GM12878 (cell line): ENCODE measurements at regions of chr17 and their contacts with region 1.

Region 1: DNA sequence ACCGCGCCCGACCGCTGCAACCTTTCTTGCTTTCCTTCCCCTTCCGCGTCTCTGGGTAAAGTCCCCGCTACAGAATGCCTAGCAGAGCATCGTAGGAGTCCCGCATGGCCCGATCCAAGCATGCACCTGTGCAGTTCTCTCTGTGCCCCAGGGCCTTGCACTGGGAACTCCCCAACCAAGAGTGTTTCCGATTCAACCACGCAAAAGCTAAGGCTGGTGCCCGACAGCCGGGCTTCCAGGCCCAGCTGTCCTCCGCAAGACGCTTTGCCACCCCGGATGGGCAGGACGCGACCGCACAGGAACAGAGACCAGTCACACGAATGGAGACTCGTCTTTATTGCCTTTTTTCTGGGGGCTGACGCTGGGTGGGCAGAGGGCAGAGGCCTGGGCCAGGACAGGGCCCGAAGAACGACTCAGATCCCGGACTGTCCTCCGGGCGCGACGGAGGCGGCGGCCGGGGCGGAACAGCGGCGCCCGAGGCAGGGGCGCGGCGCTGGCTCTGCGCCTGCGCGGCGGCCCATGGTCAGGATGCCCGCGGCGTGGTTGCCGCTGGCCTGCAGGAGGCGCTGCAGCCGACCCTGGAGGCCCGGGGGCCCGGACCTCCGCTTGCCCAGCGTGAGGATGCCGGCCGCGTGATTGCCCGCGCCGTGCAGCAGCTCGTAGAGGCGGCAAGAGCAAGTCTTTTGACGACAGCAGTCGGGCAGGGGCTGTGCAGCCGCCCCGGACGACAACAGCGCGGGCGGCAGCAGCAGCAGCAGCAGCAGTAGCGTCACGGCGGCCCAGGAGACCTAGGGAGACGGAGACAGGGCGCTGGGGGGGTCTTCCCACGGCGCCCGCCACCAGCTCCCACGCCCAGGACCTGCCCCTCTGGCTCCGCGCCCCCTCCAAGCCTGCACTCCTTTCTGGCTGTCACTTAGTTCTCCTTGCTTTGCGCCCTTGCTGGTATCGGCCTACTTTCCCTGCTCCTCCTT is 1.2 kb downstream of the HCRT start:
- DNase-seq: peak; percentile 23
- ATAC-seq: peak; percentile 79
- H3K4me3 ChIP-seq: peak overlapping the region; percentile 76
- H3K27ac ChIP-seq: no peak overlapping the region; the same call in 1 of the 2 replicates
- H3K4me1 ChIP-seq: peaks cover 27% of the 10 kb centered on the region
- H3K27me3 ChIP-seq: no peaks in the 10 kb centered on the region
- CTCF ChIP-seq: peak; percentile 74 to 90 (median 89)
- EP300 ChIP-seq: no peak
- POLR2A ChIP-seq: peak; percentile 73
- RAD21 ChIP-seq: no peak

Region 2: DNA sequence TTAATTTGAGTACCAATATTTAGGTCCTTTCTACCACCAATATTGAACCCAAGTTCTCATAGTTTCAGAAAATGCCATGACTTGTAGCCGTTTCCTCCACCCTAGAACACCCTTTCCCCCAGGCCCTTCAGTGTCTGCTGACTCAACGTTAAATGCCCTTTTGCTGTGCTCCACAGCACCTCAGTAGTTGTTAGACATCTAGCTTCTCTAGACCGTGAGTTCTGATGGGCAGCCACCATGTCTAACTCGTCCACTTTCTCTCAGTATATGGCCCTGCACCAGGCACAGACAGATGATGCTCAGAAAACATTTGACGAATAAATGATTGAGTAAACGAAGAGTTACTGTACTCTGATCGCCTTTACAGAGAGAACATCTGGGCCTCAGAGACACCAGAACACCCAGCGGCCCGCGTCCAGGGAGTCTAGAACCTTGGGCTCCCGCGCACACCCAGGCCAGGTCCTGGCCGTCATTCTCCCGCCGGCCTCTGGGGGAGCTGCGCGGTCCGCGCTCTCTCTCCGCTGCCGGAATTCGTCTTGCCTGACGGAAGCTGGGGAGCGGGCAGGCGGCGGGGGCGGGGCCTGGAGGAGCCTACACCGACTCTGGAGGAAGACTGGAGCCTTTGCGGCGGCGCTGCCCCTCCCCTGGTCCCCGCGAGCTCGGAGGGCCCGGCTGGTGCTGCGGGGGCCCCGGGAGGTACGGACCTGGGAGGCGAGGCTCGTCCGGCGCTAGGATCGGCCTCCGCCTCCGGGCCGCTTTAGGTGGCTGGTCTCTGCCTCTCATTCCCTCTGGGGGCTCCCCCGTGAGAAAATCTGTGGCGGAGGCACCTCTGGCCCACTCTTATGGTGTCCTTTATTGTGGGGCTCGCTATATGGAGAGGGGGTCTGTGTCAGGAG is 164.3 kb before region 1 on chr17 and contains the start of gene NKIRAS2:
- CTCF ChIA-PET with region 1: interaction called, 22 read pairs
- POLR2A ChIA-PET with region 1: interaction called, 3 read pairs
- RAD21 ChIA-PET with region 1: interaction called, 7 read pairs
- SMC1A ChIA-PET with region 1: interaction called, 4 read pairs
- in situ Hi-C with region 1: no loop called
- intact Hi-C with region 1: no loop called
- DNase-seq: peak; percentile 50
- ATAC-seq: peak; percentile 84
- H3K4me3 ChIP-seq: peak within 1 kb of the TSS; percentile 88
- H3K27ac ChIP-seq: peak within 1 kb of the TSS; percentile 76
- H3K4me1 ChIP-seq: peaks cover 28% of the 10 kb centered on the region
- H3K27me3 ChIP-seq: no peaks in the 10 kb centered on the region
- CTCF ChIP-seq: peak; percentile 92 to 98 (median 98); a peak in 5 of 6 replicates
- EP300 ChIP-seq: no peak
- POLR2A ChIP-seq: peak; percentile 87
- RAD21 ChIP-seq: no peak
- polyA plus RNA-seq, gene NKIRAS2: 6.4 to 6.9 TPM

Region 3: GRCh38 chr17:42112552-42113176 is 71.4 kb before region 1 on chr17 and contains the start of gene DHX58:
- CTCF ChIA-PET with region 1: interaction called, 138 read pairs
- POLR2A ChIA-PET with region 1: interaction called, 15 read pairs
- RAD21 ChIA-PET with region 1: interaction called, 78 read pairs
- SMC1A ChIA-PET with region 1: interaction called, 53 read pairs
- in situ Hi-C with region 1: no loop called
- intact Hi-C with region 1: no loop called
- DNase-seq: peak; percentile 90
- ATAC-seq: peak; percentile 85
- H3K4me3 ChIP-seq: peak within 1 kb of the TSS; percentile 79
- H3K27ac ChIP-seq: peak within 1 kb of the TSS; percentile 98
- H3K4me1 ChIP-seq: peaks cover 37% of the 10 kb centered on the region
- H3K27me3 ChIP-seq: no peaks in the 10 kb centered on the region
- CTCF ChIP-seq: no peak
- EP300 ChIP-seq: no peak
- POLR2A ChIP-seq: peak; percentile 94
- RAD21 ChIP-seq: no peak
- polyA plus RNA-seq, gene DHX58: 3.5 to 3.7 TPM

Region 4: GRCh38 chr17:42132941-42133340 is 51.1 kb before region 1 on chr17:
- CTCF ChIA-PET with region 1: interaction called, 31 read pairs
- POLR2A ChIA-PET with region 1: interaction called, 5 read pairs
- RAD21 ChIA-PET with region 1: interaction called, 10 read pairs
- SMC1A ChIA-PET with region 1: interaction called, 4 read pairs
- in situ Hi-C with region 1: no loop called
- intact Hi-C with region 1: no loop called
- DNase-seq: no peak
- ATAC-seq: peak; percentile 57
- H3K4me3 ChIP-seq: no peak overlapping the region
- H3K27ac ChIP-seq: no peak overlapping the region
- H3K4me1 ChIP-seq: peaks cover 25% of the 10 kb centered on the region
- H3K27me3 ChIP-seq: no peaks in the 10 kb centered on the region
- CTCF ChIP-seq: no peak
- EP300 ChIP-seq: no peak
- POLR2A ChIP-seq: no peak
- RAD21 ChIP-seq: no peak

Region 5: GRCh38 chr17:42153919-42154742 is 29.9 kb before region 1 on chr17:
- CTCF ChIA-PET with region 1: interaction called, 12 read pairs
- POLR2A ChIA-PET with region 1: interaction called, 6 read pairs
- RAD21 ChIA-PET with region 1: interaction called, 4 read pairs
- SMC1A ChIA-PET with region 1: interaction called, 12 read pairs
- in situ Hi-C with region 1: no loop called
- intact Hi-C with region 1: no loop called
- DNase-seq: no peak
- ATAC-seq: peak; percentile 9
- H3K4me3 ChIP-seq: peak overlapping the region; percentile 91
- H3K27ac ChIP-seq: peak overlapping the region; percentile 84
- H3K4me1 ChIP-seq: peaks cover 5% of the 10 kb centered on the region
- H3K27me3 ChIP-seq: no peaks in the 10 kb centered on the region
- CTCF ChIP-seq: no peak
- EP300 ChIP-seq: no peak
- POLR2A ChIP-seq: 0 out of 2 replicates have a peak, but pooled peaks have one; percentile 13
- RAD21 ChIP-seq: no peak

Region 6: GRCh38 chr17:42193969-42194899 is 10.2 kb after region 1 on chr17 and contains the start of gene GHDC:
- CTCF ChIA-PET with region 1: interaction called, 23 read pairs
- POLR2A ChIA-PET with region 1: interaction called, 7 read pairs
- RAD21 ChIA-PET with region 1: interaction called, 16 read pairs
- SMC1A ChIA-PET with region 1: interaction called, 13 read pairs
- in situ Hi-C with region 1: no loop called
- intact Hi-C with region 1: no loop called
- DNase-seq: peak; percentile 53
- ATAC-seq: peak; percentile 99
- H3K4me3 ChIP-seq: peak within 1 kb of the TSS; percentile 92
- H3K27ac ChIP-seq: peak within 1 kb of the TSS; percentile 95
- H3K4me1 ChIP-seq: 0 out of 2 replicates have a peak, but pooled peaks cover 3% of the 10 kb centered on the region
- H3K27me3 ChIP-seq: no peaks in the 10 kb centered on the region
- CTCF ChIP-seq: 0 out of 6 replicates have a peak, but pooled peaks of 1 of the 3 experiments have one; percentile 6
- EP300 ChIP-seq: no peak
- POLR2A ChIP-seq: peak; percentile 74
- RAD21 ChIP-seq: no peak
- polyA plus RNA-seq, gene GHDC: 0.72 to 2.2 TPM

Region 7: GRCh38 chr17:42230225-42230624 is 46.2 kb after region 1 on chr17:
- CTCF ChIA-PET with region 1: no interaction called
- POLR2A ChIA-PET with region 1: no interaction called
- RAD21 ChIA-PET with region 1: no interaction called
- SMC1A ChIA-PET with region 1: no interaction called
- in situ Hi-C with region 1: no loop called
- intact Hi-C with region 1: no loop called
- DNase-seq: no peak
- ATAC-seq: peak; percentile 28; the same call in 1 of the 3 replicates
- H3K4me3 ChIP-seq: no peak overlapping the region
- H3K27ac ChIP-seq: no peak overlapping the region
- H3K4me1 ChIP-seq: no peaks in the 10 kb centered on the region
- H3K27me3 ChIP-seq: no peaks in the 10 kb centered on the region
- CTCF ChIP-seq: no peak
- EP300 ChIP-seq: no peak
- POLR2A ChIP-seq: no peak
- RAD21 ChIP-seq: no peak

Region 8: DNA sequence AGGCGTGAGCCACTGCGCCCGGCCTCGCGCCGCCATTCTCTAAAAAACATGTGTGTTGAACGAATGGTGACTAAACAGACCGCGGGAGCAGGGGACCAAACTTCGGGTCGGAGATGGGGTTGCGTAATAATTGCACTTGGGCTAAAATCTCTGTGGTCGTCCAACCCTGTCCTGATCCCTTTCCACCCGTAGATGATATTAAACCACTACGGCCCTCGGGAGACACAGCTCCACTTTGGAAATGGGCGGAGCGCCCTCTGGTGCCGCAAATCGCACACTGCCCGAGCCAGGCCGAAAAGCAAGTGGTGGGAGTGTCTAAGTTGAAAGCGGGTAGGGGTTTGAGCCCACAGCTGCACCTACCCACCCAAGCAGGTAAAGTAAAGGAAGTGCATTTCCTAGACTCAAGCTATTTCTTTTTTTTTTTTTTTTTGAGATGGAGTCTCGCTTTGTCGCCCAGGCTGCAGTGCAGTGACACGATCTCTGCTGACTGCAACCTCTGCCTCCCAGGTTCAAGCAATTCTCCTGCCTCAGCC is 222.0 kb after region 1 on chr17:
- CTCF ChIA-PET with region 1: interaction called, 11 read pairs
- POLR2A ChIA-PET with region 1: interaction called, 5 read pairs
- RAD21 ChIA-PET with region 1: interaction called, 9 read pairs
- SMC1A ChIA-PET with region 1: interaction called, 8 read pairs
- in situ Hi-C with region 1: no loop called
- intact Hi-C with region 1: loop called (anchors 10 kb)
- DNase-seq: no peak
- ATAC-seq: peak; percentile 84
- H3K4me3 ChIP-seq: no peak overlapping the region
- H3K27ac ChIP-seq: no peak overlapping the region
- H3K4me1 ChIP-seq: peaks cover 4% of the 10 kb centered on the region; the same call in 1 of the 2 replicates
- H3K27me3 ChIP-seq: no peaks in the 10 kb centered on the region
- CTCF ChIP-seq: peak; percentile 91 to 94 (median 91)
- EP300 ChIP-seq: no peak
- POLR2A ChIP-seq: no peak
- RAD21 ChIP-seq: peak; percentile 97